CD8-positive, alpha-beta memory T cell (primary cell): ENCODE measurements at regions of chr15 and their contacts with region 1.

Region 1: DNA sequence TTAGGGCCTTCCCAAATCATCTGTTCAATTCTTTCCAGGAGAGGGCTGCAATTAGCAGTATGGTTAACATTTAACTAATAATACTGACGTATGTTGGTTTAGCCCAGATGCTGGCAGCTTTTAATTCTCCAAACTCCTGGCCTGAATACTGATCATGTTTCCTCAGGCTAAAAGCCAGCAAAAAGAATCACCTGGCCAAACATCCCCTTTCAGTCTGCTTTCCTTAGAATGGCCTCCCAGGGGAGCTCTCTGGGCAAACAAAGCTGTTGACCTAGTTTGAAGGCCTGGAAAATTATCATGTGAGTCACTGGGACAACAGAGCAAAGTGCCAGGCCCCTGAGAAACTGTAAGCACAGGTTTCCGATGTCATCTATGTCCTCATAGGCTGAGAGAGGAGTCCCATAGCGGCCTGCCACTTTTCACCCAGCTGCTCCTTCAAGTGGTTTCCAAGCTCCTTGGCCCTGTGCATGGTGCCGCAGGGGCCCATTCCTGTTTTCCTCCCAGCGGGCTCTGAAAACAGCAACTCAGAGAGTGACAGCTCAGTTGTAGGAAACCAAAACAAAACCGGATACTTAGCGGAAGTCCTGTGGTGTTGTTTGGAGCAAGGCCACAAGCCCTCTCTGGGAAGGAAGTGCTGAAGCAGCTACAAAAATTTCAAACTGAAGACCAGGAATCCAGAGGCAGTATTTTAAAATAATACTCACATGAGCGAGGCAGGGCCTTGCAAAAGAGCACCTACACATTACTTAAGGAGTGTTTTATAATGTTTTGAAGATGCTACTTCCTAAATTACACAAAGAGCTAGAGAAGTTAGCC is 36.5 kb upstream of the RAB11A start:
- DNase-seq: peak; percentile 34 to 68 (median 61)
- H3K4me3 ChIP-seq: peak overlapping the region; percentile 35
- H3K4me3 Mint-ChIP-seq: peak overlapping the region; percentile 14 to 89 (median 82)
- H3K27ac ChIP-seq: peak overlapping the region; percentile 71
- H3K27ac Mint-ChIP-seq: peak overlapping the region; percentile 78 to 100 (median 96)
- H3K4me1 ChIP-seq: peaks cover 50% of the 10 kb centered on the region
- H3K4me1 Mint-ChIP-seq: peaks cover 51 to 62% (median 58%) of the 10 kb centered on the region in 3 donors
- H3K27me3 ChIP-seq: no peaks in the 10 kb centered on the region
- H3K27me3 Mint-ChIP-seq: no peaks in the 10 kb centered on the region

Region 2: GRCh38 chr15:65818927-65819562 is 13.7 kb before region 1 on chr15:
- CTCF ChIA-PET with region 1: interaction called, 12 read pairs
- POLR2A ChIA-PET with region 1: interaction called, 10 read pairs
- DNase-seq: peak in 2 of 5 donors; percentile 87 to 89
- H3K4me3 ChIP-seq: peak overlapping the region; percentile 30
- H3K4me3 Mint-ChIP-seq: peak overlapping the region; percentile 52 to 75 (median 69)
- H3K27ac ChIP-seq: peak overlapping the region; percentile 72
- H3K27ac Mint-ChIP-seq: peak overlapping the region; percentile 95 to 98 (median 96)
- H3K4me1 ChIP-seq: peaks cover 44% of the 10 kb centered on the region
- H3K4me1 Mint-ChIP-seq: peaks cover 46 to 59% (median 55%) of the 10 kb centered on the region in 3 donors
- H3K27me3 ChIP-seq: no peaks in the 10 kb centered on the region
- H3K27me3 Mint-ChIP-seq: no peaks in the 10 kb centered on the region

Region 3: GRCh38 chr15:65862682-65863081 is 29.9 kb after region 1 on chr15:
- CTCF ChIA-PET with region 1: no interaction called
- POLR2A ChIA-PET with region 1: no interaction called
- DNase-seq: peak; percentile 13 to 66 (median 49)
- H3K4me3 ChIP-seq: no peak overlapping the region
- H3K4me3 Mint-ChIP-seq: no peak overlapping the region
- H3K27ac ChIP-seq: no peak overlapping the region
- H3K27ac Mint-ChIP-seq: no peak overlapping the region
- H3K4me1 ChIP-seq: peaks cover 4% of the 10 kb centered on the region
- H3K4me1 Mint-ChIP-seq: peaks cover 12 to 13% (median 12%) of the 10 kb centered on the region in 3 donors
- H3K27me3 ChIP-seq: no peaks in the 10 kb centered on the region
- H3K27me3 Mint-ChIP-seq: peaks cover 0 to 2% of the 10 kb centered on the region in 2 donors

Region 4: GRCh38 chr15:65887565-65887964 is 54.8 kb after region 1 on chr15:
- CTCF ChIA-PET with region 1: no interaction called
- POLR2A ChIA-PET with region 1: no interaction called
- DNase-seq: peak in 2 of 5 donors; percentile 48 to 85
- H3K4me3 ChIP-seq: no peak overlapping the region
- H3K4me3 Mint-ChIP-seq: peak overlapping the region in 3 of 7 donors; percentile 24 to 33 (median 28)
- H3K27ac ChIP-seq: no peak overlapping the region
- H3K27ac Mint-ChIP-seq: peak overlapping the region; percentile 72 to 89 (median 88)
- H3K4me1 ChIP-seq: peaks cover 33% of the 10 kb centered on the region
- H3K4me1 Mint-ChIP-seq: peaks cover 51 to 76% (median 74%) of the 10 kb centered on the region in 3 donors
- H3K27me3 ChIP-seq: no peaks in the 10 kb centered on the region
- H3K27me3 Mint-ChIP-seq: no peaks in the 10 kb centered on the region

Region 5: GRCh38 chr15:65902378-65902777 is 69.6 kb after region 1 on chr15:
- CTCF ChIA-PET with region 1: no interaction called
- POLR2A ChIA-PET with region 1: no interaction called
- DNase-seq: no peak
- H3K4me3 ChIP-seq: no peak overlapping the region
- H3K4me3 Mint-ChIP-seq: no peak overlapping the region
- H3K27ac ChIP-seq: no peak overlapping the region
- H3K27ac Mint-ChIP-seq: peak overlapping the region in 1 of 8 donors; percentile 62
- H3K4me1 ChIP-seq: no peaks in the 10 kb centered on the region
- H3K4me1 Mint-ChIP-seq: no peaks in the 10 kb centered on the region
- H3K27me3 ChIP-seq: no peaks in the 10 kb centered on the region
- H3K27me3 Mint-ChIP-seq: no peaks in the 10 kb centered on the region

Region 6: DNA sequence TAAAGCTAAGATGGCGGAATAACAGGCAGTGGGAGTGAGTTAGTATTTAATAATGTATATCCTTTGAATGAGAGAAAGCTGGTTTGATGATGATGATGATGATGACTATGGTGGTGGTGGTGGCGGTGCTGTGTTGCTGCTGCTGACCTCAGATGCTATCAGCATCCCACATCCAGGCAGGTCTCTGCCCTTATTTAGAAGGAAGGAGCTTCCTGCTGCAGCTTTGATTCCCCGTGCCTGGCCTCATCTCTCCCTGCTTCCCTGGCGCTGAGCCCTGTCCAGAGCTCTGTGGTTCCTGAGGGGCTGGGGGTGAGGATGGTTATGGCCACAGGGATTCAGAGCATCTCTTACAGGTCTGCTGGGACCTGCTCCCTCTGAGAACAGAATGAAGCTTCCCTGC is 109.7 kb after region 1 on chr15:
- CTCF ChIA-PET with region 1: no interaction called
- POLR2A ChIA-PET with region 1: no interaction called
- DNase-seq: peak in 1 of 5 donors; percentile 4
- H3K4me3 ChIP-seq: no peak overlapping the region
- H3K4me3 Mint-ChIP-seq: no peak overlapping the region
- H3K27ac ChIP-seq: no peak overlapping the region
- H3K27ac Mint-ChIP-seq: no peak overlapping the region
- H3K4me1 ChIP-seq: no peaks in the 10 kb centered on the region
- H3K4me1 Mint-ChIP-seq: peaks cover 2 to 10% (median 6%) of the 10 kb centered on the region in 3 donors
- H3K27me3 ChIP-seq: peaks cover 4% of the 10 kb centered on the region
- H3K27me3 Mint-ChIP-seq: peaks cover 7 to 8% of the 10 kb centered on the region in 2 donors